ENCODE measurements at regions of chr22 and their contacts with region 1.

Region 1: GRCh38 chr22:21966617-21967516 is 14.2 kb upstream of the PPM1F start:
- DNase-seq: no peak
- CTCF ChIP-seq: no peak

Region 2: DNA sequence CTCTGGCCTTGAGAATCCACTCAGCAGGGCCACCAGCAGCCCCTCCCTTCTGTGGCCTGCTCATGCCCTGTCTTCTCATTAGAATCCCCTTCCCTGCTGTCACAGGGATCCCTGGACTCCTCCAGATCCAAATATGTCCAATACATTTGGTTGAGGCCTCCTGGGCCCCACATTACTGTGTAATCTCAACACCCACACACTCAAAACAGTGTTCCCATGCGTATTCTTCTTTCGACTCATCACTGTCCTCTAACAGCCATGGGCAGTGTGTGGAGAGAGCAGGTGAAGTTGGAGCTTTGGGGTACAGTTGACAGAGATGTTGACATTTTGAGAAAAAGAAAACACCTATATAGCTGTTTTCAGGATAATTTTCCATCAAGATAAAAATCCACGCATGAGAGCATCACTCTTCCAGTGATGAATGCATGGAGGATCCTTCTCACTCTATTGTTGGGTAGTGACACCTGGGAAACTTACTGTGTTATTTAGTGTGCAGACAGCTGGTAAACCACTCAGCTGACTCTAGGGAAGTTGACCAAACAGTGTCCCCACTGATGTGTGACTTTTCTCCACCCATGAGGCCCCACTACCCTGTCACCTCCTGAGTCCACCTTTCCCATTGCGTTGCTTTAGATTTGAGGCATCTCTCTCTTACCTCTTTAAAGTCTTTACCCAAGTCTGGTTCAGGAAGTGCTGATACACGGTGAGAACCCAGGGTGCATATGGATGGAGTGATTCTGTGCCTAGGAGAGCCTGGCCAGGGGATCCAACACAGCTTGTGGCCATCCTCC is 249.0 kb after region 1 on chr22:
- in situ Hi-C with region 1: loop called (anchors 5 kb)
- DNase-seq: no peak
- CTCF ChIP-seq: no peak

Measured in GM13977 (cell line).